ENCODE measurements at regions of chr10 and their contacts with region 1.

Region 1: DNA sequence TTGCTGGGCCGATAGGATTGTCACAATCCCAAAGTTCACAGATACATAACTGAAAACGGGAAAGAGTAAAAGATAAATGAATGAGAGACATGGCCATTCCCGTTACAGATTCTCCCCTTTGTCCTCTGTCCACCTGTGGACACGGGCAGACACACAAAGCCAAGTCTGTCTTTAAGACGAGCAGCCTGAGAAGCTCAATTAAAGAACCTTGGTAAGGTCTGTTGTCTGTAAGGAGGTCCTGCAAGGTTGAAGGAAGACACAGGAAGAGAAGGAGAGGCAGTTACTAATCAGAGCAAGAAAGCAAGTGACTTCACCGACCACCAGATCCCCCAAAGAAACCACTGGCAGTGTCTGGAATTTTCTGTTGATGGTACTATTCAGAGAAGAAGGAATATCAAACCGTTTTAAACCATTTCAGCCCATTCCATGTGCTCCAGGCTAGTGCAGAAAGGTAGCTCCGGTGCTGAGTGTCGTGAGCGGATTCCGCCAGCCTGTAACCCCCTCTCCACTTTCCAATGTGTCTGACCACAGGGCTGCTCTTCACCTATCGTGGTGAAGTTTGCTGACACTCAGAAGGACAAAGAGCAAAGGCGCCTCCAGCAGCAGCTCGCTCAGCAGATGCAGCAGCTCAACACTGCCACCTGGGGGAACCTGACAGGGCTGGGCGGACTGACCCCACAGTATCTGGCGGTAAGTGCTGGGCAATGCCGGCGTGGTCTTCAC is 252.6 kb downstream of the CELF2 start:
- DNase-seq: peak; percentile 24 to 68 (median 56)
- ATAC-seq: peak; percentile 90
- H3K4me3 ChIP-seq: no peak overlapping the region
- H3K4me3 Mint-ChIP-seq: peak overlapping the region in 2 of 10 donors; percentile 29 to 54
- H3K27ac ChIP-seq: no peak overlapping the region
- H3K27ac Mint-ChIP-seq: peak overlapping the region in 8 of 9 donors; percentile 24 to 83 (median 70)
- H3K4me1 ChIP-seq: peaks cover 0 to 4% of the 10 kb centered on the region in 2 donors
- H3K4me1 Mint-ChIP-seq: peaks cover 33 to 75% (median 66%) of the 10 kb centered on the region in 7 donors
- H3K27me3 ChIP-seq: no peaks in the 10 kb centered on the region
- H3K27me3 Mint-ChIP-seq: no peaks in the 10 kb centered on the region

Region 2: GRCh38 chr10:9331583-9332008 is 1938.7 kb before region 1 on chr10:
- CTCF ChIA-PET with region 1: no interaction called
- POLR2A ChIA-PET with region 1: no interaction called
- intact Hi-C with region 1: loop called in 1 of 2 experiments (anchors 1 kb)
- DNase-seq: peak in 7 of 9 donors; percentile 17 to 60 (median 43)
- ATAC-seq: peak; percentile 75
- H3K4me3 ChIP-seq: no peak overlapping the region
- H3K4me3 Mint-ChIP-seq: no peak overlapping the region
- H3K27ac ChIP-seq: no peak overlapping the region
- H3K27ac Mint-ChIP-seq: no peak overlapping the region
- H3K4me1 ChIP-seq: no peaks in the 10 kb centered on the region
- H3K4me1 Mint-ChIP-seq: no peaks in the 10 kb centered on the region
- H3K27me3 ChIP-seq: no peaks in the 10 kb centered on the region
- H3K27me3 Mint-ChIP-seq: peaks cover 10 to 35% (median 21%) of the 10 kb centered on the region in 5 donors

Region 3: DNA sequence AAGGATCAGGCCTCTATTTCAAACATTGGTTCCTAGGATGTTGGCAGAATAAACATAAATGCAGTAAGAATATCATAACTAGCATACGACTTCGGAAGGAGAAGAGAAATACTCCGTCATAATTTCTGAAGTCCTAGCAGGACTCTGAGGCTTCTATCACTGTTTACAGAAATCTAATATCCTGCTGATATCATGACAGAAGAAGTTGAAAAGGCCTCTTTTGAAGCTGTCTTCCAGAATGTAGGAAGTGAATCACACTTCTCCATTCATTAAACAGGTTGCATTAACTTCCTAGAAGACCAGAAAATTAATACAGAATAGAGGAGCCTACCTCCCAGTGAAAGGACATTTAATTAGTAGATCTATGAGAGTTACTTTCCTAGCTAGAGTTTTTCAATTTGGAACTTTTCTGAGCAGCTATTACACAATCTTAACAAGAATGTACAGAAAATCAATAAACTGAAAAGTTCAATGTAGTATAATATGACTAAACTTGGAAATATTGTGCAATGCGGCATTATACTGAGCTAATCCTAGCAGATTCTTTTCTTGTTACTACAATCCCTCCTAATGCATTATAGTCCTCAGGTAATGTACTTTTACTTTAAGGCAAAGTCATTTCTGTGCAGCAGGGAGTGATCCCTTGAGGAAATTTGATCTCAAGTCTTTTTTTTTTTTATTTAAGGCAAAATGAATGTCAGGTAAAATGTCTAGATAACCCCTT is 875.2 kb before region 1 on chr10:
- CTCF ChIA-PET with region 1: no interaction called
- POLR2A ChIA-PET with region 1: no interaction called
- intact Hi-C with region 1: loop called in 1 of 2 experiments (anchors 10 kb)
- DNase-seq: no peak
- ATAC-seq: no peak
- H3K4me3 ChIP-seq: no peak overlapping the region
- H3K4me3 Mint-ChIP-seq: no peak overlapping the region
- H3K27ac ChIP-seq: no peak overlapping the region
- H3K27ac Mint-ChIP-seq: no peak overlapping the region
- H3K4me1 ChIP-seq: no peaks in the 10 kb centered on the region
- H3K4me1 Mint-ChIP-seq: no peaks in the 10 kb centered on the region
- H3K27me3 ChIP-seq: no peaks in the 10 kb centered on the region
- H3K27me3 Mint-ChIP-seq: peaks cover 2 to 29% (median 15%) of the 10 kb centered on the region in 5 donors

Region 4: GRCh38 chr10:11017570-11018431 is 252.5 kb before region 1 on chr10 and contains the start of gene CELF2:
- CTCF ChIA-PET with region 1: no interaction called
- POLR2A ChIA-PET with region 1: no interaction called
- intact Hi-C with region 1: loop called in 1 of 2 experiments (anchors 10 kb)
- DNase-seq: peak; percentile 35 to 62 (median 42)
- ATAC-seq: peak; percentile 80
- H3K4me3 ChIP-seq: peak within 1 kb of the TSS; percentile 40
- H3K4me3 Mint-ChIP-seq: peak within 1 kb of the TSS; percentile 69 to 91 (median 80)
- H3K27ac ChIP-seq: no peak within 1 kb of the TSS
- H3K27ac Mint-ChIP-seq: peak within 1 kb of the TSS in 2 of 9 donors; percentile 32 to 70
- H3K4me1 ChIP-seq: peaks cover 4% of the 10 kb centered on the region in 2 donors
- H3K4me1 Mint-ChIP-seq: peaks cover 0 to 17% (median 11%) of the 10 kb centered on the region in 7 donors
- H3K27me3 ChIP-seq: peaks cover 5 to 21% of the 10 kb centered on the region in 2 donors
- H3K27me3 Mint-ChIP-seq: peaks cover 69 to 88% (median 74%) of the 10 kb centered on the region in 5 donors
- total RNA-seq, gene CELF2: 135 to 207 (median 178) TPM

Region 5: DNA sequence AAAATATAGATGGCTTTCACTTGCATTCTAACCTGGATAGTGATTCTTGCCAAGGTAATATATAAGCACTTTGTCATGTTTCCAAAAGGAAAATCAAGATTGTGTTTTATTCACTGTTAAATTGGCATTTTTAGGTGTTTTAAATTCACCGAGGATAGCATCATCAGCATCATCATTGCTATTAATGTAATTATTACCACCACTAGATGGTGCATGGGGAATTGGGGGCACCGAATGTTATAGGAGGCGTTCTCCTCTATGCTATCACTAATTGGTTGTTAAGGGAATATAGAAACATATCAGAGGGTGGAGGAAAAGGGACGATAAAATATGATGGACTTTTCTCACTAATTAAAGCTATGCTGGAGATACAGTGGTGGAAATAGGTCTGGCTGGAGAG is 157.1 kb before region 1 on chr10:
- CTCF ChIA-PET with region 1: interaction called, 29 read pairs
- POLR2A ChIA-PET with region 1: interaction called, 7 read pairs
- intact Hi-C with region 1: loop called (anchors 1 kb)
- DNase-seq: peak in 7 of 9 donors; percentile 48 to 69 (median 65)
- ATAC-seq: peak; percentile 97
- H3K4me3 ChIP-seq: no peak overlapping the region
- H3K4me3 Mint-ChIP-seq: peak overlapping the region in 9 of 10 donors; percentile 12 to 85 (median 63)
- H3K27ac ChIP-seq: peak overlapping the region; percentile 9
- H3K27ac Mint-ChIP-seq: peak overlapping the region in 8 of 9 donors; percentile 0 to 92 (median 72)
- H3K4me1 ChIP-seq: peaks cover 0 to 9% of the 10 kb centered on the region in 2 donors
- H3K4me1 Mint-ChIP-seq: peaks cover 10 to 56% (median 38%) of the 10 kb centered on the region in 7 donors
- H3K27me3 ChIP-seq: no peaks in the 10 kb centered on the region
- H3K27me3 Mint-ChIP-seq: peaks cover 0 to 5% (median 0%) of the 10 kb centered on the region in 5 donors

Region 6: GRCh38 chr10:13206546-13207443 is 1936.5 kb after region 1 on chr10:
- CTCF ChIA-PET with region 1: no interaction called
- POLR2A ChIA-PET with region 1: no interaction called
- intact Hi-C with region 1: no loop called
- DNase-seq: no peak
- ATAC-seq: no peak
- H3K4me3 ChIP-seq: no peak overlapping the region
- H3K4me3 Mint-ChIP-seq: no peak overlapping the region
- H3K27ac ChIP-seq: no peak overlapping the region
- H3K27ac Mint-ChIP-seq: no peak overlapping the region
- H3K4me1 ChIP-seq: no peaks in the 10 kb centered on the region
- H3K4me1 Mint-ChIP-seq: no peaks in the 10 kb centered on the region
- H3K27me3 ChIP-seq: no peaks in the 10 kb centered on the region
- H3K27me3 Mint-ChIP-seq: no peaks in the 10 kb centered on the region

Measured in naive thymus-derived CD4-positive, alpha-beta T cell (primary cell).